Transverse colon (tissue), 4 donors: ENCODE measurements at regions of chr16 and their contacts with region 1.

Region 1: DNA sequence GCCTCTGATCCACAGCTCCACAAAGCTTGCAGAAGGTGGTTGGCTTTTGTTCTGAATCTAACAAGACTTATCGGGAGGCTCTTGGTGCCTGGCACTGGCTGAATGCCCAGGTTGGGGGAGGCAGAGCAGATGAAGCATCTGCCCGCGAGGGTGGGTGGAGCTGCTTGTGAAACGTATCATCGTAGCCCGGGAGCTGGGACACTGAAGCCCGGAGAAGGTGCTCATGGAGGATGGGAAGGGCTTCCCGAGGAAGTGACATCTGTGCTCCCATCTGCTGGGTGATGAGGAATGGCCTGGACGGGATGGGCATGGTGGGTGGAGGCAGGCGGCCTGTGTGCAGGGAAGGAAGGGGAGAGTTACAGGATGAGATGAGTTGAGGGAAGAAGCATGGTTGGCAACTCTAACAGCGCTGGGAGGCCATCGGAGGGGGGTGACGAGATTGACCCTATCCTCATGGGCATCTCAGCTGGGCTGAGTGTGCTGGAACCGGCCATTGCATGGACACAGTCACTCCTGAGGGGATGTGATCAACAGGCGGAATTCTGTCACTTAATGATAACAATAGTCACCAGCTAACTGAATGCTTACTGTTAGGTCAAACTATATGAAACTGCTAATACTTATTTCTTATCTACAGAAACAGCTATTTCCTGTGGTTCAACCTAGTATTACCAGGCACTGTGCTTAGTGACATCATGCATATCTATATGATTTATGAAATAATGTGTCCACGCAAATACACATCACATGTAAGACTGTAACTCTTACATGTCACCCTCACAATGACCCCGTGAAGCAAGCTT is 102.7 kb downstream of the ABCC6 start:
- DNase-seq: peak; percentile 48
- H3K4me3 ChIP-seq: no peak overlapping the region
- H3K27ac ChIP-seq: peak overlapping the region; percentile 19 to 63 (median 54)
- H3K4me1 ChIP-seq: peaks cover 0 to 10% (median 2%) of the 10 kb centered on the region in 4 donors
- H3K27me3 ChIP-seq: no peaks in the 10 kb centered on the region
- CTCF ChIP-seq: no peak
- EP300 ChIP-seq: no peak
- POLR2A ChIP-seq: no peak

Region 2: GRCh38 chr16:15874745-15875314 is 245.8 kb before region 1 on chr16:
- in situ Hi-C with region 1: loop called (anchors 10 to 25 kb)
- intact Hi-C with region 1: no loop called
- DNase-seq: peak; percentile 53
- H3K4me3 ChIP-seq: no peak overlapping the region
- H3K27ac ChIP-seq: peak overlapping the region in 3 of 4 donors; percentile 32 to 73 (median 53)
- H3K4me1 ChIP-seq: peaks cover 0 to 13% (median 2%) of the 10 kb centered on the region in 4 donors
- H3K27me3 ChIP-seq: no peaks in the 10 kb centered on the region
- CTCF ChIP-seq: peak; percentile 60 to 67 (median 65)
- EP300 ChIP-seq: no peak
- POLR2A ChIP-seq: no peak

Region 3: DNA sequence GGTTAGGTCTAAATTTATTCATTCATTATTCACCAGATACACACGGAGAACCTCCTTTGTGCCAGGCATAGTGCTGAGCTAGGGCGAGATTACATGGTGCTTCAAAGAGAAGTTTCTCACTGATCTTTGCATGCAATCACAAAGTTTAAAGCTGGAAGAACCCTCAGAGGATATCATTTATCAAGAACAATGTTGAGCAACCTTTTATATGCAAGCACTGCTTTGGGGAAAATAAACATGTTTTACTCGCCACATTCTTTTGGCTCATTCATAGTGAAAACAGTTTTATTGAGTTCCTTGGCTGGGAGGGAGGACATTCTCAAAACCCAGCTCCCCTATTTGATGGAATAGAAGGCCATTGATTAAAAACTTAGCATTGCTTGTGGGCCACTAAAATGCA is 1400.0 kb after region 1 on chr16:
- in situ Hi-C with region 1: no loop called
- intact Hi-C with region 1: no loop called
- DNase-seq: no peak
- H3K4me3 ChIP-seq: no peak overlapping the region
- H3K27ac ChIP-seq: no peak overlapping the region
- H3K4me1 ChIP-seq: no peaks in the 10 kb centered on the region
- H3K27me3 ChIP-seq: peaks cover 5% of the 10 kb centered on the region
- CTCF ChIP-seq: no peak
- EP300 ChIP-seq: no peak
- POLR2A ChIP-seq: no peak